ENCODE measurements at regions of chr1 and their contacts with region 1.

Region 1: DNA sequence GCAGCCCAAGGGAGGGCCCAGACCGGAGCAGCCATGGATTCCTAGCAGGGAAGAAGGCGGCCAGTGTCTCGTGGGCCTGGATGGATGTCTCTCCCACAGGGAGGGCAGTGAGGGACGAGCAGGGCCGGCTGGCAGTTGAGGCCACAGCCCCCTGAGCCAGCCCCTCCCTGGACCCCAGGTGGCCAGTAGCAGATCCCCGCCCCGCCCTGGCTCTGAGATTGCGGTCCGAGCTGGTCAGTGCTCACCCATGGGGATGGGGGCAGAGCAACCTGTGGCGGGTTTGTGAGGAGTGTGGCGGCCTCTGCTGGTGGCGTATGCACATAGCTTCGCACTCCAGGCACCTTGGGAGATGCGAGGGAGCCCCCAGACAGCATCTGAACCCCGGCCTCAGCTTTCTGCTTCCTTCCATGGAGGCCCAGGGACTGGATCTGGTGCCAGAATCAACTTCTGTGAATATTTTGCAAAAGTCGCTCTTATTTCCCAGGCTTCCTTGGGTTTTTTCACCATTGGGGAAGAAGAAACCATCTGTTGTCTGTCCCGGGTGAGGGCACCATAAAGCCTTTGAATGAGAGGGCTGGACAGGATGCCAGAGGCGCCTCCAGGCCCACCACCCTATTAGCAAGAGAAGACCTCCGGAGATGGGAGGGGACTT is 8.4 kb upstream of the KCNN3 start:
- DNase-seq: peak; percentile 83
- H3K4me3 ChIP-seq: no peak overlapping the region
- H3K27ac ChIP-seq: no peak overlapping the region
- H3K4me1 ChIP-seq: peaks cover 3% of the 10 kb centered on the region
- CTCF ChIP-seq: peak; percentile 96

Region 2: GRCh38 chr1:154669464-154670282 is 208.8 kb before region 1 on chr1:
- CTCF ChIA-PET with region 1: interaction called, 5 read pairs
- POLR2A ChIA-PET with region 1: interaction called, 3 read pairs
- intact Hi-C with region 1: loop called (anchors 1 kb)
- DNase-seq: peak; percentile 89
- H3K4me3 ChIP-seq: no peak overlapping the region
- H3K27ac ChIP-seq: no peak overlapping the region
- H3K4me1 ChIP-seq: peaks cover 8% of the 10 kb centered on the region
- CTCF ChIP-seq: peak; percentile 97

Region 3: GRCh38 chr1:154765970-154766369 is 112.5 kb before region 1 on chr1:
- CTCF ChIA-PET with region 1: no interaction called
- POLR2A ChIA-PET with region 1: no interaction called
- intact Hi-C with region 1: loop called (anchors 2 kb)
- DNase-seq: peak; percentile 25
- H3K4me3 ChIP-seq: no peak overlapping the region
- H3K27ac ChIP-seq: no peak overlapping the region
- H3K4me1 ChIP-seq: peaks cover 14% of the 10 kb centered on the region
- CTCF ChIP-seq: peak; percentile 64